CD8-positive, alpha-beta T cell (primary cell): ENCODE measurements at regions of chr1 and their contacts with region 1.

Region 1: GRCh38 chr1:98794196-98794886 is 132.8 kb downstream of the SNX7 start:
- DNase-seq: peak; percentile 9 to 80 (median 51)
- ATAC-seq: peak; percentile 93
- H3K4me3 ChIP-seq: no peak overlapping the region
- H3K4me3 Mint-ChIP-seq: no peak overlapping the region
- H3K27ac ChIP-seq: no peak overlapping the region
- H3K27ac Mint-ChIP-seq: no peak overlapping the region
- H3K4me1 ChIP-seq: peaks cover 18% of the 10 kb centered on the region
- H3K4me1 Mint-ChIP-seq: peaks cover 24% of the 10 kb centered on the region
- H3K27me3 ChIP-seq: no peaks in the 10 kb centered on the region
- H3K27me3 Mint-ChIP-seq: no peaks in the 10 kb centered on the region
- CTCF ChIP-seq: peak; percentile 79

Region 2: GRCh38 chr1:98870959-98871903 is 76.9 kb after region 1 on chr1:
- CTCF ChIA-PET with region 1: no interaction called
- POLR2A ChIA-PET with region 1: interaction called, 4 read pairs
- intact Hi-C with region 1: loop called in 1 of 2 experiments (anchors 2 kb)
- DNase-seq: peak in 7 of 9 experiments; percentile 18 to 93 (median 53)
- ATAC-seq: peak; percentile 91
- H3K4me3 ChIP-seq: peak overlapping the region; percentile 26 to 38
- H3K4me3 Mint-ChIP-seq: peak overlapping the region; percentile 79
- H3K27ac ChIP-seq: peak overlapping the region; percentile 43 to 73
- H3K27ac Mint-ChIP-seq: peak overlapping the region; percentile 95
- H3K4me1 ChIP-seq: peaks cover 25% of the 10 kb centered on the region
- H3K4me1 Mint-ChIP-seq: peaks cover 27% of the 10 kb centered on the region
- H3K27me3 ChIP-seq: no peaks in the 10 kb centered on the region
- H3K27me3 Mint-ChIP-seq: no peaks in the 10 kb centered on the region
- CTCF ChIP-seq: no peak

Region 3: DNA sequence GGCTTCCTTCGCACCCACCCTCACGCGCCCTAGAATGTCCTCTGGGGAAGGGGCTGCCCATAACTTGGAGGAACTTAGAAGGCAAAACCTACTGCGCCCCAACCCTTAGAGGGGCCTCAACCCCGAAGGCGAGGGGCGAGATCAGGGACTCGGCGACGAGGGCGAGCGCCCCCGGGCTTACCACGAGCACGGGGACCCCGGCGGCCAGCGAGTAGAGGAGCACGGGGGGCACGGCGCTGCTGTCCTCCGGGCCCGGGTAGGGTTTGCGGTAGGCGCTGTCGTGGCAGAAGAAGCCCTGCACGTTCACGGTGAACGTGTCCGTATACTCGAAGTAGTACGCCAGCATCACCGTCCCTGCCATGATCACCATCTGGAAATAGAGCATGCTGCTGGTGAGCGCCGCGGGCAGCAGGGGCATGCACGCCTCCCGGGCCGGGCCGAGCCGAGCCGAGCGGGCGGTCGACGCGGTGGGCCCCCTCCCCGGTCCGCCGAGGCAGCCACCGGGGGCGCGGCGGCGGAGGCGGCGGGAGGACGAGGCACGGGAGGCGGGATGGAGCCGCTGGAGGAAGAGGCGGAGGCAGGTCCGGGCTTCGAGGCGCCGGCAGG is 210.0 kb after region 1 on chr1:
- CTCF ChIA-PET with region 1: interaction called, 4 read pairs
- POLR2A ChIA-PET with region 1: no interaction called
- intact Hi-C with region 1: loop called in 1 of 2 experiments (anchors 10 kb)
- DNase-seq: peak in 6 of 9 experiments; percentile 9 to 55 (median 25)
- ATAC-seq: peak; percentile 23
- H3K4me3 ChIP-seq: peak overlapping the region; percentile 24 to 44
- H3K4me3 Mint-ChIP-seq: peak overlapping the region; percentile 75
- H3K27ac ChIP-seq: no peak overlapping the region
- H3K27ac Mint-ChIP-seq: no peak overlapping the region
- H3K4me1 ChIP-seq: no peaks in the 10 kb centered on the region
- H3K4me1 Mint-ChIP-seq: peaks cover 8% of the 10 kb centered on the region
- H3K27me3 ChIP-seq: peaks cover 15% of the 10 kb centered on the region in 2 experiments
- H3K27me3 Mint-ChIP-seq: peaks cover 47% of the 10 kb centered on the region
- CTCF ChIP-seq: no peak

Region 4: DNA sequence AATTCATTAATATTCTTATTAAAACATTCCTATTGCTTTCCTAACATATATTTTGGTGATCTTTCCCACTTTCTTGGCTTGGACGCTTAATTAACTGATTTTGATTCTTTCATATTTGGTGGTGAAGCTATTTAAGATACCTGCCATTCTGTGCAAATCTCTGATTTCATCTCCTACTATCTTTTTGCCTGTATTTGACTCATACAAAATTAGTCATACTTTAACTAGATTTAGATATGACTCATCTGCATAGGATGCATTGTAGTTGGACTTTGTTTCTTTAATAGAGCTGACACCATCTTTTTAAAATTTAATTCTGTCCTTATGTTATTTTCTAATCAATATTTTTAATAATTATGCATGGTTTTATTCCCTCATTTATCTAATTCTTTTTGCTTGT is 376.2 kb after region 1 on chr1:
- CTCF ChIA-PET with region 1: interaction called, 4 read pairs
- POLR2A ChIA-PET with region 1: no interaction called
- intact Hi-C with region 1: loop called in 1 of 2 experiments (anchors 1 kb)
- DNase-seq: no peak
- ATAC-seq: no peak
- H3K4me3 ChIP-seq: no peak overlapping the region
- H3K4me3 Mint-ChIP-seq: no peak overlapping the region
- H3K27ac ChIP-seq: no peak overlapping the region
- H3K27ac Mint-ChIP-seq: no peak overlapping the region
- H3K4me1 ChIP-seq: no peaks in the 10 kb centered on the region
- H3K4me1 Mint-ChIP-seq: no peaks in the 10 kb centered on the region
- H3K27me3 ChIP-seq: no peaks in the 10 kb centered on the region
- H3K27me3 Mint-ChIP-seq: peaks cover 18% of the 10 kb centered on the region
- CTCF ChIP-seq: no peak

Region 5: DNA sequence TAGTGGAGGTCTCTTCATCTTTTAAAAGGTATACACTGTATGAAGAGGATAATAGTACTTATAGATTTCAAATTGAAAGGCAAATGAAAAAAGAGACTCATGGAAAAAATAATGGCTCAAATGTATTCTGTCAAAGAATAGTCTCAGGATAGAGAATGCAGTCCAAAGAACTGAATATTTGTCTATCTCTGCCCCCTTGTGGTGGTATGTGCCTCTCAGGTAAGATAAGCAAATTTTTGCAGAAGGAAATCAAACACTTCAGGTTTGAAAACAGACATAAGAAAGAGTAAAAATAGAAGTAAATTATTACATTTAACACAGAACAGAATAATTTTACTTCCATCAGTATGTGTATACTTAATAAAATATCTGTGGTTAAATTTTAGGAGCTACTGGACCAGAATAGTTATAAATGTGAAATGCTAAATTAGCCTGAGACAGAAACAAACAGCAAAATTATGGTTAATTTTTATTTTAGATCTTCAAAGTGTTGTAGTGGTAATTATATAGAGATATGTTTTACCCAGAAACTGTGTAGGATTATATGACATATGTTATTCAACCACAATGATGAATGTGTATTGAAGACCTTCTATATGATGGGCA is 687.2 kb after region 1 on chr1:
- CTCF ChIA-PET with region 1: interaction called, 37 read pairs
- POLR2A ChIA-PET with region 1: no interaction called
- intact Hi-C with region 1: loop called (anchors 1 kb)
- DNase-seq: peak in 5 of 9 experiments; percentile 5 to 58 (median 38)
- ATAC-seq: no peak
- H3K4me3 ChIP-seq: no peak overlapping the region
- H3K4me3 Mint-ChIP-seq: no peak overlapping the region
- H3K27ac ChIP-seq: no peak overlapping the region
- H3K27ac Mint-ChIP-seq: no peak overlapping the region
- H3K4me1 ChIP-seq: no peaks in the 10 kb centered on the region
- H3K4me1 Mint-ChIP-seq: no peaks in the 10 kb centered on the region
- H3K27me3 ChIP-seq: no peaks in the 10 kb centered on the region
- H3K27me3 Mint-ChIP-seq: peaks cover 21% of the 10 kb centered on the region
- CTCF ChIP-seq: peak; percentile 63